ENCODE measurements at regions of chr2 and their contacts with region 1.

Region 1: GRCh38 chr2:27663463-27664249 is at the starts of genes SLC4A1AP and SUPT7L:
- DNase-seq: peak; percentile 94
- ATAC-seq: peak; percentile 80
- H3K4me3 ChIP-seq: peak within 1 kb of the TSS; percentile 75 to 100 (median 97)
- H3K4me3 Mint-ChIP-seq: peak within 1 kb of the TSS; percentile 99
- H3K27ac ChIP-seq: peak within 1 kb of the TSS; percentile 75 to 99
- H3K27ac Mint-ChIP-seq: peak within 1 kb of the TSS; percentile 99
- H3K4me1 ChIP-seq: peaks cover 19 to 23% of the 10 kb centered on the region in 2 donors
- H3K4me1 Mint-ChIP-seq: peaks cover 42% of the 10 kb centered on the region
- H3K27me3 ChIP-seq: no peaks in the 10 kb centered on the region
- H3K27me3 Mint-ChIP-seq: no peaks in the 10 kb centered on the region
- CTCF ChIP-seq: no peak
- total RNA-seq, gene SLC4A1AP: 23.1 and 25.6 TPM in 2 replicates
- total RNA-seq, gene SUPT7L: 40.2 and 40.7 TPM in 2 replicates

Region 2: GRCh38 chr2:27582695-27583389 is 80.8 kb before region 1 on chr2 and contains the start of gene ZNF512:
- CTCF ChIA-PET with region 1: no interaction called
- POLR2A ChIA-PET with region 1: no interaction called
- intact Hi-C with region 1: loop called (anchors 10 kb)
- DNase-seq: peak; percentile 93
- ATAC-seq: peak; percentile 94
- H3K4me3 ChIP-seq: peak within 1 kb of the TSS; percentile 66 to 98 (median 80)
- H3K4me3 Mint-ChIP-seq: peak within 1 kb of the TSS; percentile 96
- H3K27ac ChIP-seq: peak within 1 kb of the TSS; percentile 70 to 72
- H3K27ac Mint-ChIP-seq: peak within 1 kb of the TSS; percentile 96
- H3K4me1 ChIP-seq: peaks cover 17 to 29% of the 10 kb centered on the region in 2 donors
- H3K4me1 Mint-ChIP-seq: peaks cover 40% of the 10 kb centered on the region
- H3K27me3 ChIP-seq: no peaks in the 10 kb centered on the region
- H3K27me3 Mint-ChIP-seq: peaks cover 1% of the 10 kb centered on the region
- CTCF ChIP-seq: no peak
- total RNA-seq, gene ZNF512: 65.2 and 72.3 TPM in 2 replicates

Region 3: GRCh38 chr2:27771548-27772335 is 108.1 kb after region 1 on chr2 and contains the start of gene MRPL33:
- CTCF ChIA-PET with region 1: no interaction called
- POLR2A ChIA-PET with region 1: interaction called, 5 read pairs
- intact Hi-C with region 1: loop called (anchors 1 kb)
- DNase-seq: peak; percentile 93
- ATAC-seq: peak; percentile 94
- H3K4me3 ChIP-seq: peak within 1 kb of the TSS; percentile 62 to 91 (median 85)
- H3K4me3 Mint-ChIP-seq: peak within 1 kb of the TSS; percentile 100
- H3K27ac ChIP-seq: peak within 1 kb of the TSS; percentile 75 to 93
- H3K27ac Mint-ChIP-seq: peak within 1 kb of the TSS; percentile 99
- H3K4me1 ChIP-seq: peaks cover 11 to 22% of the 10 kb centered on the region in 2 donors
- H3K4me1 Mint-ChIP-seq: peaks cover 34% of the 10 kb centered on the region
- H3K27me3 ChIP-seq: peaks cover 0 to 16% (median 2%) of the 10 kb centered on the region in 4 experiments
- H3K27me3 Mint-ChIP-seq: peaks cover 13% of the 10 kb centered on the region
- CTCF ChIP-seq: no peak
- total RNA-seq, gene MRPL33: 26.5 and 26.9 TPM in 2 replicates

Region 4: DNA sequence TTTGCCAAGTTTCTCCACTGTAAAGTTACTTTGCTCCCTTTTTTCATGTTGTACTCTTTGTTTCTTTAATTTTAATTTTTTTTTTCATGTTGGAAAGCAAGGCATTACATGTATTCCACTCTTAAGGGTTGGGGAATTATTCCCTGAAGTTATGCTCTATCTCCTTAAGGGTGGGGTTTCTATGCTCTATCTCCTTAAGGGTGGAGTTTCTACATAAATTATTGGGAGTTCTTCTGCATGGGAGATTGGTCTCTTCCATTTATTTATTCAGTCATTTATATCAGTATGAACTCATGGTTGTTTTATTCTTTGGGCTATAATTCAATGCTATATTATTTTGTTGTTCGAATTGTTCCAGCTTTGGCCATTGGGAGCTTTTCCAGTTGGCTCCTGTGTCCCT is 119.0 kb after region 1 on chr2:
- CTCF ChIA-PET with region 1: no interaction called
- POLR2A ChIA-PET with region 1: no interaction called
- intact Hi-C with region 1: no loop called
- DNase-seq: no peak
- ATAC-seq: no peak
- H3K4me3 ChIP-seq: no peak overlapping the region
- H3K4me3 Mint-ChIP-seq: no peak overlapping the region
- H3K27ac ChIP-seq: no peak overlapping the region
- H3K27ac Mint-ChIP-seq: no peak overlapping the region
- H3K4me1 ChIP-seq: no peaks in the 10 kb centered on the region
- H3K4me1 Mint-ChIP-seq: peaks cover 5% of the 10 kb centered on the region
- H3K27me3 ChIP-seq: no peaks in the 10 kb centered on the region
- H3K27me3 Mint-ChIP-seq: no peaks in the 10 kb centered on the region
- CTCF ChIP-seq: no peak